Left ventricle myocardium superior (tissue), 1 donor: ENCODE measurements at regions of chr9 and their contacts with region 1.

Region 1: GRCh38 chr9:92342825-92343488 is 17.2 kb downstream of the CENPP start:
- DNase-seq: no peak
- ATAC-seq: no peak

Region 2: DNA sequence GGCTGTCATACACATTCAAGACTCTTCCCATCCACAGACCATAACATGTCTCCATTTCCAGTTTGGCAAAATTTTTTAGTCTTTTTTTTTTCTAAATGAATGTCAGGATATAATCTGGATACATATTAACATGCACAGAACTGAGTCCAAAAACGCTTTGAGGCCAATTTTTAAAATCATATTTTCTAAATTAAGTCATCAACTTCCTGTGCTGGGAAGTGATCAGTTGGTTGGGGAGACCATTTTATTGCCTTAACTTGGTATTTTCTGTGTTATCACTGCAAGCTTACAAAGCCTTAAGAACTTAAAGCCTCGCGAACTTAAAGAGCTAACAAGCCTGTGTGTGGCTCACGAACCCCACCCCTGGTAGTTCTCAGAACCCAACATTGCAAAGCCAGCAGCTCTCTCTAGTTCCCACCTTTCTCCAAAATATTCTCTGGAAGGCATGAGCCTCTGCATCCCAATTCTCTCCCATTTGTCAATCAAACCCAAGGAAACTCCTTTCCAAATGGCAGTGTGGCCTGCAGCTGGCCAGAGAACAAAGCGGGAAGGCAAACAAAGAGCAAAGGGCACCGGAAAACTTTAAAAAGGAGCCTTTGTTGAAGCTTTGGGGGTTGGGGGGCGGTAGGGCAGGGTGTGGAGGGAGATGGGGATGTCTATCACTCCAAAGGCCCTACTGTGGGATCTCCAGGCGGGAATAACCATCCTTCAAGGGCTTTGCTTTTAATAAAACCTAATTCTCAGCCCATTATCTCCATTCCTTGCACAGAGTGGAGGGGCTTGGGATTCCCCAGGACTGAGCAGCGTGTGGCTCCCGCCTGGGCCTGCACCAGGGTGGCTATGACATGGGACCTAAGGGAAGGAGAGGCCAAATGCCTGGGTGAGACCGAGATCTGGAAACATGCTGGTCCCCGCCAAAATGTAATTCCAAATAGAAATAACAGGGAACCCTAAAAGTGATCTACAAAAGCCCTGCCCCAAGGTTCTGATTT is 458.0 kb before region 1 on chr9:
- intact Hi-C with region 1: no loop called
- DNase-seq: no peak
- ATAC-seq: no peak

Region 3: DNA sequence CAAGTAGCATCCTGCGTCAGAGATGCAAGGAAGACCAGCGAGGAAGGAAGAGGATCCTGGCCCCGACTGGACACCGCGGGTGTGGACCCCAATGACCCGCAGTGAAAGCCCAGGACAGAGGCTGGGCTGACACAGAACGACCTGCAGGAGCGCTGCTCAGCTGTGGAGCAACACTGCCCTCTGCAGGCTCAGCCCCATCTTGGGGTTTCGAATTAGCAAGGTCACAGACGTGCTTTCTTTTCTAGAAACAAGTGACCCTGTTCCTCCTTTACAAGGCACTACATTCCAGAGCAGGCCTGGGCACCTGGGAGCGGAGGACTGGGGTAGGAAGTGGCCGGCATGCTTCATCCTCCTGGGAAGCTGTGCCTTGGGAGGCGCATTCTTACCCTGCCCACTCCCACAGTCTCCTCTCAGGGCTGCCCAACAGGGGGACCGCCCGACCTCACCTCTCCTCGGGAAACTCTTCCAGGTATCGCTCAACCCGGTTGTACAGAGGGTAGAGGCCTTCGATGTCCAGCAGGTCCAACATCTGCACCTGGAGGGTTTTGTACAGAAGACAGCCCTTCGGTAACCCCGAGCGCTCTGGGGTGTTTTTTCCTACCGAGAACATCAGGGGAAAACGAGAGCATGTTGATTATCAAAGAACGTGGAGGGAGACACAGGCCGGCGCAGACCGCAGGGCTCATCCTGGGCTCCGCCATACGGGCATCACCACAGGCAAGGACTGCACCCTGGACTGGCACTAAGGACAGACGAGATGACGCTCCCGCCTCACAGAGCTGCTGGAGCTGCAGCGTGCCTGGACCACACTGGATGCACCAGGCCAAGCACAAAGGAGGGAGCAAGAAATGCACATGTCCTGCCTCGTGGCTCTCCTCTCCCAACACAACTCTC is 292.0 kb after region 1 on chr9:
- intact Hi-C with region 1: loop called (anchors 10 kb)
- DNase-seq: peak; percentile 87
- ATAC-seq: peak; percentile 89